ENCODE measurements at regions of chr11 and their contacts with region 1.

Region 1: GRCh38 chr11:10405855-10406592 is 49.0 kb upstream of the AMPD3 start:
- DNase-seq: peak; percentile 79 to 86
- H3K4me3 ChIP-seq: no peak overlapping the region
- CTCF ChIP-seq: no peak
- POLR2A ChIP-seq: no peak

Region 2: GRCh38 chr11:10618490-10618889 is 212.5 kb after region 1 on chr11:
- intact Hi-C with region 1: no loop called
- DNase-seq: peak in 1 of 2 donors; percentile 11
- H3K4me3 ChIP-seq: no peak overlapping the region
- CTCF ChIP-seq: no peak
- POLR2A ChIP-seq: no peak

Region 3: GRCh38 chr11:10659339-10660216 is 253.6 kb after region 1 on chr11:
- intact Hi-C with region 1: loop called (anchors 10 kb)
- DNase-seq: peak; percentile 79 to 89
- H3K4me3 ChIP-seq: no peak overlapping the region
- CTCF ChIP-seq: no peak
- POLR2A ChIP-seq: no peak

Region 4: GRCh38 chr11:10735481-10736475 is 329.8 kb after region 1 on chr11:
- intact Hi-C with region 1: loop called (anchors 5 kb)
- DNase-seq: peak; percentile 95 to 99
- H3K4me3 ChIP-seq: no peak overlapping the region
- CTCF ChIP-seq: peak in 1 of 3 donors; percentile 98
- POLR2A ChIP-seq: no peak

Measured in lower leg skin (tissue), 4 donors.